ENCODE measurements at regions of chr1 and their contacts with region 1.

Region 1: GRCh38 chr1:10032590-10033358 is at the start of gene UBE4B:
- DNase-seq: peak; percentile 98 to 99 (median 98)
- H3K4me3 ChIP-seq: peak within 1 kb of the TSS; percentile 92
- H3K27ac ChIP-seq: peak within 1 kb of the TSS; percentile 75 to 93
- H3K4me1 ChIP-seq: peaks cover 3% of the 10 kb centered on the region
- H3K27me3 ChIP-seq: no peaks in the 10 kb centered on the region
- CTCF ChIP-seq: peak; percentile 81 to 94 (median 84)
- EP300 ChIP-seq: no peak
- POLR2A ChIP-seq: no peak
- total RNA-seq, gene UBE4B: 31.3 to 46.9 (median 38.9) TPM

Region 2: GRCh38 chr1:8560611-8561544 is 1471.9 kb before region 1 on chr1:
- intact Hi-C with region 1: no loop called
- DNase-seq: peak in 1 of 5 donors; percentile 36
- H3K4me3 ChIP-seq: no peak overlapping the region
- H3K27ac ChIP-seq: no peak overlapping the region
- H3K4me1 ChIP-seq: peaks cover 17% of the 10 kb centered on the region
- H3K27me3 ChIP-seq: no peaks in the 10 kb centered on the region
- CTCF ChIP-seq: peak; percentile 53 to 95 (median 94)
- EP300 ChIP-seq: no peak
- POLR2A ChIP-seq: no peak

Region 3: GRCh38 chr1:9942939-9943788 is 89.6 kb before region 1 on chr1 and contains the starts of genes LZIC and NMNAT1:
- intact Hi-C with region 1: loop called in 1 of 4 experiments (anchors 10 kb)
- DNase-seq: peak; percentile 85 to 94 (median 90)
- H3K4me3 ChIP-seq: peak within 1 kb of the TSS; percentile 73
- H3K27ac ChIP-seq: peak within 1 kb of the TSS in 1 of 2 donors; percentile 67
- H3K4me1 ChIP-seq: peaks cover 5% of the 10 kb centered on the region
- H3K27me3 ChIP-seq: no peaks in the 10 kb centered on the region
- CTCF ChIP-seq: peak in 2 of 3 donors; percentile 9 to 48
- EP300 ChIP-seq: no peak
- POLR2A ChIP-seq: peak; percentile 63
- total RNA-seq, gene LZIC: 21.2 to 54.3 (median 40.2) TPM
- total RNA-seq, gene NMNAT1: 2.3 to 8.2 (median 5.8) TPM

Region 4: DNA sequence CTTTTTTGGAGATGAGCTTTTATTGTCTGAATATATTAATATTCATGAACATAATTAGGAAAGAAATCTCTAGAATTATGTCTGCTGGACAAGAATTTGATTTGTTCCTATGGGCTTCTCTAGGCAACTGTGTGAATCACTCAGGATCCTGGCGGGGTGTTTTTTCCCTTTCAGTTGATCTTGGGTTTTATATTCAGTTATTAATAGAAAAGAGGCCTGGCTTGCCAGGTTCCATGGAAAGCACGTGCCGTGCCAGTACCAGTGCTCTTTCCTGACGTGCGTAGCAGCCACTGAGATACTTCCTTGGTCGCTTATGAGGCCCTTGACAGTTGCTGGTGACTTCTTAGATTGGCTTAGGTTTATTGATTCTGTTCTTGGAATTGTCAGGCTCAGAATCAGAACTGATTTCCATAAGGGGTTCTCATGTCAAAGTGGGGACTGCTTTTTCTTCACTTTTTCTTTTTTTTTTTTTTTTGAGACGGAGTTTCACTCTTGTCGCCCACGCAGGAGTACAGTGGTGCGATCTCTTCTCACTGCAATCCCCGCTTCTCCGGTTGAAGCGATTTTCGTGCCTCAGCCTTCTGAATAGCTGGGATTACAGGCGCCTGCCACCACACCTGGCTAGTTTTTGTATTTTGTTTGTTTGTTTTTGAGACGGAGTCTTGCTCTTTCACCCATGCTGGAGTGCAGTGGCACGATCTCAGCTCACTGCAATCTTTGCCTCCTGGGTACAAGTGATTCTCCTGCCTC is 128.9 kb after region 1 on chr1:
- intact Hi-C with region 1: no loop called
- DNase-seq: no peak
- H3K4me3 ChIP-seq: no peak overlapping the region
- H3K27ac ChIP-seq: no peak overlapping the region
- H3K4me1 ChIP-seq: no peaks in the 10 kb centered on the region
- H3K27me3 ChIP-seq: no peaks in the 10 kb centered on the region
- CTCF ChIP-seq: no peak
- EP300 ChIP-seq: no peak
- POLR2A ChIP-seq: no peak

Region 5: GRCh38 chr1:10209905-10210810 is 177.4 kb after region 1 on chr1 and contains the start of gene KIF1B:
- intact Hi-C with region 1: loop called in 1 of 4 experiments (anchors 2 kb)
- DNase-seq: peak; percentile 99 to 100 (median 99)
- H3K4me3 ChIP-seq: peak within 1 kb of the TSS; percentile 89
- H3K27ac ChIP-seq: peak within 1 kb of the TSS; percentile 96 to 99
- H3K4me1 ChIP-seq: peaks cover 9% of the 10 kb centered on the region
- H3K27me3 ChIP-seq: no peaks in the 10 kb centered on the region
- CTCF ChIP-seq: peak; percentile 98 to 99 (median 99)
- EP300 ChIP-seq: peak; percentile 38
- POLR2A ChIP-seq: peak; percentile 97
- total RNA-seq, gene KIF1B: 34.8 to 44.2 (median 38.0) TPM

Measured in ovary (tissue), 10 donors.